Activated CD4-positive, alpha-beta T cell treated with anti-CD3 and anti-CD28 coated beads for 36 hours (primary cell): ENCODE measurements at regions of chr9 and their contacts with region 1.

Region 1: GRCh38 chr9:76810377-76810957 is 46.2 kb downstream of the PCA3 start:
- DNase-seq: peak; percentile 58
- ATAC-seq: no peak
- H3K4me3 Mint-ChIP-seq: no peak overlapping the region
- H3K27ac Mint-ChIP-seq: no peak overlapping the region
- H3K4me1 Mint-ChIP-seq: no peaks in the 10 kb centered on the region
- H3K27me3 Mint-ChIP-seq: peaks cover 13% of the 10 kb centered on the region

Region 2: GRCh38 chr9:76859860-76860259 is 49.4 kb after region 1 on chr9:
- CTCF ChIA-PET with region 1: no interaction called
- POLR2A ChIA-PET with region 1: no interaction called
- intact Hi-C with region 1: no loop called
- DNase-seq: no peak
- ATAC-seq: no peak
- H3K4me3 Mint-ChIP-seq: no peak overlapping the region
- H3K27ac Mint-ChIP-seq: no peak overlapping the region
- H3K4me1 Mint-ChIP-seq: no peaks in the 10 kb centered on the region
- H3K27me3 Mint-ChIP-seq: peaks cover 2% of the 10 kb centered on the region

Region 3: GRCh38 chr9:76987594-76988200 is 177.2 kb after region 1 on chr9:
- CTCF ChIA-PET with region 1: interaction called, 4 read pairs
- POLR2A ChIA-PET with region 1: no interaction called
- intact Hi-C with region 1: loop called in 1 of 2 experiments (anchors 2 kb)
- DNase-seq: peak; percentile 22
- ATAC-seq: no peak
- H3K4me3 Mint-ChIP-seq: no peak overlapping the region
- H3K27ac Mint-ChIP-seq: no peak overlapping the region
- H3K4me1 Mint-ChIP-seq: no peaks in the 10 kb centered on the region
- H3K27me3 Mint-ChIP-seq: peaks cover 2% of the 10 kb centered on the region

Region 4: GRCh38 chr9:76996700-76997099 is 186.2 kb after region 1 on chr9:
- CTCF ChIA-PET with region 1: interaction called, 19 read pairs
- POLR2A ChIA-PET with region 1: no interaction called
- intact Hi-C with region 1: no loop called
- DNase-seq: peak; percentile 42
- ATAC-seq: no peak
- H3K4me3 Mint-ChIP-seq: no peak overlapping the region
- H3K27ac Mint-ChIP-seq: no peak overlapping the region
- H3K4me1 Mint-ChIP-seq: no peaks in the 10 kb centered on the region
- H3K27me3 Mint-ChIP-seq: peaks cover 4% of the 10 kb centered on the region

Region 5: DNA sequence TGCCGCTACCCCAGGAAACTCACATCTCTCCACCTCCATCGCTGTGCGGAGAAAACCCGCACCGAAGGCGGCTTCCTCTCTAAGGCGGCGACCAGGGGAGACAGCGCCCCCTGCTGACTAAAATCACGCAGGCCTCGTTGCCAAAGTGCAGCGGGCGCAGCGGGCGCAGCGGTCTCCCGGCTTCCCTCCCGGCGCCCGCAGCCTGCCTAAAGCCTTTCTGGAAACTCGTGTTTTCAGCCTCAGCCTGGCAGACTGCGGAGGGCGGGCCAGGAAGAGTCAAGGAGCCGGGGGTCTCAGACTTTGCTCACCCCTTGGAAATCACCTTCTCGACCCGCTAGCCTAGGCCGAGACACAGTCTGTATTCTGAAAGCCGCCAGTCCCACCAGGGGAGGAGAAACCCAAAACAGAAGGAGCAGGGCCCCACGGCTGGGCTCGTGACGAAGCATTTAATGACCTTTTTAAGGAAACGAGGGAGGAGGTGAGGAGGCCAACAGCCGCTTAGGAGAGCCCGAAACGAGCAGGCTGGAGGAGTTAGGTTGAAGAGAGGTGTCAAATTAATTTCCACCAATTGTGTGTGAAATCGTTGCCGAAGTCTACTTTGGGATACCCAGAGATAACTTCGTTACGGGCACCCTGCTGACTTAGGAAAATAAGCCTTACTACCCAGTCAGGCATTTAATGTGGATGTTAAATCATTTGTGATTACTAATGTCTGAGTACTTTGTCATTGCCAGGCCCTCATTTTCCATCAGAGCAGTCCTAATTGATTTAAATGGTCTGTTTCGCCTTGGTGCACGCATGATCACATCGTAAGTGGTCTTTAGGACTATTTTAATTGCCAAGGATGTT is 201.7 kb after region 1 on chr9:
- CTCF ChIA-PET with region 1: interaction called, 4 read pairs
- POLR2A ChIA-PET with region 1: no interaction called
- intact Hi-C with region 1: loop called (anchors 1 to 2 kb)
- DNase-seq: peak; percentile 86
- ATAC-seq: peak; percentile 77
- H3K4me3 Mint-ChIP-seq: peak overlapping the region; percentile 46
- H3K27ac Mint-ChIP-seq: no peak overlapping the region
- H3K4me1 Mint-ChIP-seq: peaks cover 17% of the 10 kb centered on the region
- H3K27me3 Mint-ChIP-seq: peaks cover 64% of the 10 kb centered on the region